Ovary (tissue), 10 donors: ENCODE measurements at regions of chr15 and their contacts with region 1.

Region 1: GRCh38 chr15:98554272-98555172 is 93.8 kb upstream of the IGF1R start:
- DNase-seq: no peak
- H3K4me3 ChIP-seq: no peak overlapping the region
- H3K27ac ChIP-seq: no peak overlapping the region
- H3K4me1 ChIP-seq: no peaks in the 10 kb centered on the region
- H3K27me3 ChIP-seq: no peaks in the 10 kb centered on the region
- CTCF ChIP-seq: no peak
- EP300 ChIP-seq: no peak
- POLR2A ChIP-seq: no peak

Region 2: DNA sequence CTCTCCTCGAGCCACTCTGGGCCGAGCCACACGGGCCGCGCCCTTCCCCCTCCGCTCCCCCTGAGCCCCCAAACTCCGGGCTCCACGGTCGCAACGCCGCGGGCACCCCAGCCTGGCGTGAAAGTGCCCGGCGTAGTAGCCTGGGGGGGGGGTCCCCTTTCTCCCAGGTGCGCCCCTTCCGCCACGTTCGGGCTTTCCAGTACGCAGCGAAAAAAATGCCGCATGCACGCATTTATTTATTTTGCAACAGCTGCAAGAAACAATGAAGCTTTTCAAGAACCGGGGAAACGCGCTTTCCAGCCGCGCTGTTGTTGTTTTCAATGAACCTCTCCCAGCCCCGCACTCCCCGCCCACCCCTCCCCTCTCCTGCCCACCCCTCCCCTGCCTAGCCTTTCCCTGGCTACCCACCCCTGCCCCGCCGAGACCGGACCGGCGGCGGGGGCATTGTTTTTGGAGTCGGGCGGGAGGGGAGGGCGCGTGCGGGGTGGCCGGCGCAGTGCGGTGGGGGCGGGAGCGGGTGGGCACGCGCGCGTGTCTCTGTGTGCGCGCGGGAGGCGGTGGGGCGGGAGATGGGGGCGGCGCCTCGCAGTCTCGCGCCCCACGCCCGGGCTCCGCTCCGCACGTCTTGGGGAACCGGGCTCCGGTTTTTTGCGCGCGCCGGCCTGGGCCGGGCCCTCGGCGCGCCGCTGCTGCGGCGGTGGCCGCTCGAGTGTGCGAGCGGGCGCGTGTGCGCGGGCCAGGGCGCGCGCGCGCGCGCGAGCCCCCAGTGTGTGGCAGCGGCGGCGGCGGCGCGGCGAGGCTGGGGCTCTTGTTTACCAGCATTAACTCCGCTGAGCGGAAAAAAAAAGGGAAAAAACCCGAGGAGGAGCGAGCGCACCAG is 93.5 kb after region 1 on chr15 and contains the start of gene IGF1R:
- intact Hi-C with region 1: no loop called
- DNase-seq: peak; percentile 86 to 95 (median 91)
- H3K4me3 ChIP-seq: peak within 1 kb of the TSS; percentile 93
- H3K27ac ChIP-seq: peak within 1 kb of the TSS; percentile 95 to 97
- H3K4me1 ChIP-seq: peaks cover 2% of the 10 kb centered on the region
- H3K27me3 ChIP-seq: no peaks in the 10 kb centered on the region
- CTCF ChIP-seq: peak in 2 of 3 donors; percentile 35 to 43
- EP300 ChIP-seq: no peak
- POLR2A ChIP-seq: peak; percentile 29
- total RNA-seq, gene IGF1R: 39.5 to 88.7 (median 70.2) TPM

Region 3: GRCh38 chr15:98700519-98700918 is 146.0 kb after region 1 on chr15:
- intact Hi-C with region 1: no loop called
- DNase-seq: no peak
- H3K4me3 ChIP-seq: no peak overlapping the region
- H3K27ac ChIP-seq: no peak overlapping the region
- H3K4me1 ChIP-seq: peaks cover 47% of the 10 kb centered on the region
- H3K27me3 ChIP-seq: no peaks in the 10 kb centered on the region
- CTCF ChIP-seq: no peak
- EP300 ChIP-seq: no peak
- POLR2A ChIP-seq: no peak

Region 4: GRCh38 chr15:99671926-99672635 is 1117.6 kb after region 1 on chr15:
- intact Hi-C with region 1: loop called in 1 of 4 experiments (anchors 5 kb)
- DNase-seq: no peak
- H3K4me3 ChIP-seq: no peak overlapping the region
- H3K27ac ChIP-seq: no peak overlapping the region
- H3K4me1 ChIP-seq: peaks cover 1% of the 10 kb centered on the region
- H3K27me3 ChIP-seq: no peaks in the 10 kb centered on the region
- CTCF ChIP-seq: no peak
- EP300 ChIP-seq: no peak
- POLR2A ChIP-seq: no peak